ENCODE measurements at regions of chr5 and their contacts with region 1.

Region 1: GRCh38 chr5:132386644-132387286 is 17.3 kb downstream of the SLC22A5 start:
- DNase-seq: no peak
- H3K4me3 ChIP-seq: no peak overlapping the region
- H3K27me3 ChIP-seq: no peaks in the 10 kb centered on the region
- CTCF ChIP-seq: peak; percentile 87

Region 2: GRCh38 chr5:132180134-132180745 is 206.5 kb before region 1 on chr5:
- CTCF ChIA-PET with region 1: interaction called, 15 read pairs
- POLR2A ChIA-PET with region 1: no interaction called
- DNase-seq: peak; percentile 19
- H3K4me3 ChIP-seq: no peak overlapping the region
- H3K27me3 ChIP-seq: no peaks in the 10 kb centered on the region
- CTCF ChIP-seq: peak; percentile 83

Region 3: DNA sequence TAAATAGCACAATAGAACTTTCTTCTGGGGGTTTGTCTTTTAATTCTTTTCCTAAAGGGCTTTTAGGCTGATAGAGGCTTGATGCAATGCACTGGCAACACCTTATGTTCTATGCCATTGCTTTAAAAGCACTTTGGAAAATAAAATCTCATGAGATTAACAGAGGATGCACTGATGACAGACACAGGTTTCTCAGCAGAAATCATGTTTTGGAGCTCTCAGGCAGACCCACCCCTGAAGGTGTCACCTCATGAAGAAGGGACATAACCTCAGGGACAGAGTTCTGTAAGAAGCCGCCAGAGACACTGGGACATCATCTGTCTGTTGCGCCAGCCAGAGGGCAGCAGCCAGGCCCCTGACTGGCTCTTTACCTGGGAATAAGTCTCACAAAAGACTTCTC is 10.5 kb after region 1 on chr5:
- CTCF ChIA-PET with region 1: no interaction called
- POLR2A ChIA-PET with region 1: no interaction called
- DNase-seq: no peak
- H3K4me3 ChIP-seq: no peak overlapping the region
- H3K27me3 ChIP-seq: no peaks in the 10 kb centered on the region
- CTCF ChIP-seq: no peak

Region 4: DNA sequence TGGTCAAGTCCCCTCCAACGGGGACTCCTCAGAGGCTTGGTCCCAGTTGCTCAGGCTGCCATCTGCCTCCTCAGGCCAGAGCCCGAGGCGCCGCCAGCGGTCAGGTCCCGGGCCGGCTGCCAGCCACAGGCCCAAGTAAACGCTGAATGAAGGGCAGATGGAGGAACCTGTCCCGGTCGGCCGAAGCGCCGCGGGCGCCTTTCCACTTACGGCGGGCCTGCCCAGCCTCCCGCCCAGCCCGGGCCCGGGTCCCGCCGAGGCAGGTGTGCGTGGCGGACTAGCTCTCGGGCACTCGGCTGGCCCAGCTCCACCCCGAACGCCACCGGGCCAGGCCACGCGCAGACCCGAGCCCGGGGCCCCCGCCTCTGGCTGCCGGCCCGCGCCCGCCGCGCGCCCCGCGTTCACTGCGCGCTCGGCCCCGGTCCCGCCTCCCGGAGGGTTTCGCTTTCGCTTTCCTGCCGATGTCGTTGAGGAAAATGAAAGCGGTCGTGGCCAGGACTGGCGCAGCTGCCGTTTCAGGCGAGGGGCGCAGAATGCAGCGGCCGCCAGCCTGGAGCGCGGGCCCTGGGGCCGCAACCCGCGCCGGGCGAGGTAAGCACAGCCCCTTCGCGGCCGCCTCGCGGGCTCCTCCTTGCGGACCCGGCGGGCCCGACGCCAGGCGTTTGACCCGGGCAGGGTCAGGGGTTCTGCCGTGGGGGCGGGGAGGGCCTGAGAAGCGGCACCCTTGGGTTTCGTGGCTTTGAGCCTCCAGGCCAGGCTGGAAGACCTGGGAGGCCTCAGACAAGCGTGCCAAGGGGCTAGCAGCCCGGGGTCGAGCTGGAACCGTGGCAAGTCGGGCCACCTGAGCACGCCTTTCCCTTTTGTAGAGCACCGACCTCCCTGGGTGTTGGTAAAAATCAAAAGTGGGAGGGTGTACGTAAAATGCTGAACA is 24.0 kb after region 1 on chr5:
- CTCF ChIA-PET with region 1: interaction called, 12 read pairs
- POLR2A ChIA-PET with region 1: no interaction called
- DNase-seq: no peak
- H3K4me3 ChIP-seq: peak overlapping the region; percentile 55
- H3K27me3 ChIP-seq: no peaks in the 10 kb centered on the region
- CTCF ChIP-seq: peak; percentile 54

Region 5: DNA sequence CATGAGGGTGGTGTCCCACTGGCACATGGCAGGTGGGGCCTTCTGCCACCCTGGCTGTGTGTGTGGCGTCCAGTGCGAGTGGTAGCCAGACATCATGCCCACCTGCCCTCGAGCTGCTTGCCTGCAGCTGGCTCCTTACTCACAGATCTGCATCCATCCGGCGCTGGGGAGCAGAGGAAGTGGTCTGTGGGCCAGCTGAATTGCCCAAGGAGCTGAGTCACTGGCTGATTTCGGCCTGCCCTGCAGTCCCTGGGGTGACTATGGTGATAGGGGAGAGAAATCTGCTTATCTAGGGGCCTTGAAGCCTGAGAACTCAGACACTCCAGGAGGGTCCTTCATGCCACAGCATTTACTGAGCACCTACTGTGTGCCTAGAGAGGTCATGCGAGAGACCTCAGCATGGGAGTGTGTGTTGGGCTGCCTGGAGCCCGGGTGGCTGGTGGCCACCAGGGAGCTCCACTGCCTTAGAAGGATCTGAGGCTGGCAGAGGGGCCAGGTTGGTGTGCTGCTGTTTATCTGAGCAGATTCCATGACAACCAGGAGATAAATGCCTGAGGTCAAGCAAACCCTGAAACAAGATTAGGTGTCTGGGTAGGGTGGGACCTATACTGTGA is 39.9 kb after region 1 on chr5:
- CTCF ChIA-PET with region 1: interaction called, 29 read pairs
- POLR2A ChIA-PET with region 1: no interaction called
- DNase-seq: peak; percentile 72
- H3K4me3 ChIP-seq: no peak overlapping the region
- H3K27me3 ChIP-seq: no peaks in the 10 kb centered on the region
- CTCF ChIP-seq: peak; percentile 67

Region 6: DNA sequence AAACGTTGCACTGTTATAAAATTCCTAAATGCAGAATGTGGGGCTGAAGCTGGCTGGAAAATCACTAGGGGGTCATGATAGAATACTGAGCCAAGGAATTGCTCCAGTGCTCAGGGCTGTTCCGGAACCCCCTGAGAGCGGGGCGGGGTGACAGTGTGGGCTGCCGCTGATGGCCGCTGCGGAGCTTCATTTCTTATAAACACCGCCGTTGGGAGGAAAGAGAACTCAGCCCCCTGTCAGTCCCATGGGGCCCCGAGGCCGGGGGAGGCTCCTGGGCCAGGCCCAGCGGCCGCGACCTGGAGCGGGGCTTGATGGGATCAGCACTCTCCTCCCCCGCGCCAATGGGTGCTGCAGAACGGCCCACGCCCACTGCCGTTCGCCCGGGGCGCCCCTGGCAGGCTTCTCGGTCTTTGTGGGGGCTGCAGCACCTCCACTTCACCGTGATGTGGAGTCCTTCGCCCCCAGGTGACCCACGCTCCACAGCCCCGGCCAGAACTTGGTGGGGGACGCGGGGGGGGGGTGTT is 109.0 kb after region 1 on chr5:
- CTCF ChIA-PET with region 1: interaction called, 255 read pairs
- POLR2A ChIA-PET with region 1: interaction called, 4 read pairs
- DNase-seq: peak; percentile 57
- H3K4me3 ChIP-seq: peak overlapping the region; percentile 59
- H3K27me3 ChIP-seq: no peaks in the 10 kb centered on the region
- CTCF ChIP-seq: peak; percentile 33

Region 7: GRCh38 chr5:132526290-132526973 is 139.7 kb after region 1 on chr5:
- CTCF ChIA-PET with region 1: interaction called, 9 read pairs
- POLR2A ChIA-PET with region 1: interaction called, 15 read pairs
- DNase-seq: no peak
- H3K4me3 ChIP-seq: no peak overlapping the region
- H3K27me3 ChIP-seq: peaks cover under 1% of the 10 kb centered on the region
- CTCF ChIP-seq: peak; percentile 85

Measured in BJ (cell line).